Heart left ventricle (tissue), 16 donors: ENCODE measurements at regions of chr12 and their contacts with region 1.

Region 1: DNA sequence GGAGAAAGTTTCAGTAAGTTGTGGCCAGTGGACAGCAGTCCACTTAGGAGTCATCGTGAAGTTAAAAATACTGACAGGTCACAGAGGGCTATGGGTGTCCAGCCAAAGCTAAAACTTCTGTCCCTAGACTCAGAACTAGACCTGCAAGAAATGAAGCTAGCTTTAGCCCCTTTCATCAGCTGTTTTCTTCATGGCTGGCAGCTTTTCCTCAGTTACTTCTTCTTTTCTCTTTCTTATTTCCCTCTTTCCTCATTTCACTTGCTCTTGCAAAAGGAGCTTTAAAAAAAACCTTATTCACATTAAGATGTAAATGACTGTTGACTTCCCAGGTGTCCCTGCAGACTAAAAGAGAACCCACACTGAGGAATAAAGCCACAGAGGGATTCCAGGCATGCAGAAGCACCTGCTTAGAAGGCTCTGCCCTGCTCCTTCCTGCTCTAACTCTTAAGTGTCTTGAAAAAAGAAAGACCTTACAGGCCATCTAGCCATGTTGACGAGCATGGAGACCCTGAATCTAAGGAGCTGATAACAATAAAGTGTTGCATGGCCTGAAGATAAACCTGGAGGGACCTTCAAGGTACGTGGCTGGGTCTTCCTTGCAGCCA is 69.7 kb upstream of the CCND2 start:
- DNase-seq: no peak
- ATAC-seq: no peak
- H3K4me3 ChIP-seq: no peak overlapping the region
- H3K27ac ChIP-seq: no peak overlapping the region
- H3K4me1 ChIP-seq: peaks cover 0 to 3% (median 0%) of the 10 kb centered on the region in 12 donors
- H3K27me3 ChIP-seq: peaks cover 0 to 30% (median 0%) of the 10 kb centered on the region in 9 donors
- CTCF ChIP-seq: no peak
- POLR2A ChIP-seq: no peak

Region 2: DNA sequence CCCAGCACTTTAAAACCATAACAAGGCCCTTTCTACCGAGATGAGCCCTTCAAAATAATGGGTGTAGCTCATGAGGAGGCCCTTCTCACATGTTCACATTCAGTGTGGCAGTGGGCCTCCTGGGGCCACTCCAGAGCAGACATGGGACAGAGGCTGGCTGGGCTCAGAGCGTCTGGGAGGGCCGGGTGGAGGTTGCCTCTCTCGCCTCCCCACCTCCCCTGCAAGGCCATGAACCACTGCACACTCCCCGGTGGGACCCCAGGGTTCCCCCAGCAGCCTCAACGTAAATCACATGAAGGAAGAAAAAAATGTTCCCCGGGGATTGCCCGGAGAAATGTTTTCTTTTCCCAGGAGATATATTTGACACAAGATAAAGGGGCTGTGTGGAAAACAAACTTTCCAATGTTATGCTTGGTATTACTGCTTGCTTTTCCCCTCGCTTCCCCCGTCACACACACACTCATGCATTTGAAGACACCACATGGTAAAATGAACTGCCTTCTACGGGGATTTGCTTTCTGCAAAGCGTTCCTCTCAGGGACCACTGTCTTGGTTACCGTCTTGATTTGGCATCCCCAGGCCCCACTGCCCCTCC is 121.0 kb before region 1 on chr12:
- intact Hi-C with region 1: no loop called
- DNase-seq: peak in 1 of 5 donors; percentile 37
- ATAC-seq: no peak
- H3K4me3 ChIP-seq: no peak overlapping the region
- H3K27ac ChIP-seq: no peak overlapping the region
- H3K4me1 ChIP-seq: no peaks in the 10 kb centered on the region
- H3K27me3 ChIP-seq: no peaks in the 10 kb centered on the region
- CTCF ChIP-seq: no peak
- POLR2A ChIP-seq: no peak

Region 3: GRCh38 chr12:4178424-4179170 is 25.3 kb before region 1 on chr12:
- intact Hi-C with region 1: loop called in 1 of 10 experiments (anchors 2 kb)
- DNase-seq: no peak
- ATAC-seq: no peak
- H3K4me3 ChIP-seq: no peak overlapping the region
- H3K27ac ChIP-seq: no peak overlapping the region
- H3K4me1 ChIP-seq: no peaks in the 10 kb centered on the region
- H3K27me3 ChIP-seq: peaks cover 0 to 9% (median 0%) of the 10 kb centered on the region in 9 donors
- CTCF ChIP-seq: no peak
- POLR2A ChIP-seq: no peak

Region 4: GRCh38 chr12:4307593-4308333 is 103.9 kb after region 1 on chr12:
- intact Hi-C with region 1: no loop called
- DNase-seq: peak in 4 of 5 donors; percentile 69 to 77 (median 72)
- ATAC-seq: peak; percentile 75 to 89 (median 86)
- H3K4me3 ChIP-seq: peak overlapping the region in 3 of 12 donors; percentile 10 to 32 (median 15)
- H3K27ac ChIP-seq: peak overlapping the region in 10 of 12 donors; percentile 17 to 72 (median 41)
- H3K4me1 ChIP-seq: peaks cover 3 to 54% (median 30%) of the 10 kb centered on the region in 12 donors
- H3K27me3 ChIP-seq: no peaks in the 10 kb centered on the region
- CTCF ChIP-seq: peak; percentile 56 to 80 (median 68)
- POLR2A ChIP-seq: no peak